ENCODE measurements at regions of chr14 and their contacts with region 1.

Region 1: GRCh38 chr14:51979088-51979709 is 10.1 kb upstream of the RTRAF start:
- DNase-seq: peak; percentile 63
- H3K4me3 ChIP-seq: no peak overlapping the region; a peak in 1 of 4 replicates
- H3K27ac ChIP-seq: peak overlapping the region in 1 of 2 experiments; percentile 55; a peak in 1 of 4 replicates
- H3K4me1 ChIP-seq: peaks cover 0 to 2% of the 10 kb centered on the region in 2 experiments; a peak in 2 of 4 replicates
- H3K27me3 ChIP-seq: no peaks in the 10 kb centered on the region
- CTCF ChIP-seq: peak; percentile 91
- EP300 ChIP-seq: no peak
- RAD21 ChIP-seq: peak; percentile 93

Region 2: DNA sequence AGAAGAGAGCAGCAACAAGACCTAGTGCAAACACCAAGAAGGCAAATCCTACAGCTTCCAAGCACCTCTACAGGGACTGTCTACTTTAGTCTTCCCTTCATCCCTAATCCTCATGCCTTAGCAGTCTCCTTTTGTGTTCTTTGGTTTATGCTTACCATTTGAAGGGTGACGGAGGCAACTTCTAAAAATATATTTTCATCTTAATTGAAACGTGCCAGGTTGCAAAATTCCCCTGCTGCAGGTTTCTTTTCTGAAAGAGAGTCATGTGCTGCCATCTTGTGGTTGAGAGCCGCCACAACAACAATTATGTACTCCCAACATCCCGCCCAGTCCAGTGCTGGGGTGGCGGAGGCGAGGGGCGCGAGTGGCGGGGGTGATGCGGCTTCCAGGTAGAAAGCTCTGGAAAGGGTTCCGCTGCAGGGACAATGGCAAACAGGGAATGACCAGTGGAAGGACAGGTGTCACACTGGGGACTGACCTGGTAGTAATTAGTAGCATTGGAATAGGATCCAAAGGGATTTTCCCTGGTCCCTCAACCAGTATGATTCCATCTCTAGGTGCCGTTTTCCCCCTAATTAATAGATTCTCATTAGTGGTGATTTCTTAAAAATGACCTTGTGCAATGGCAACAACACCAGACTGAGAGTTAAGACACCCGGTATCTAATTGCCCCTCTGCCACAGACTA is 199.1 kb before region 1 on chr14:
- CTCF ChIA-PET with region 1: interaction called, 81 read pairs
- POLR2A ChIA-PET with region 1: no interaction called
- DNase-seq: peak; percentile 80
- H3K4me3 ChIP-seq: peak overlapping the region; percentile 33 to 52; a peak in 3 of 4 replicates
- H3K27ac ChIP-seq: no peak overlapping the region; a peak in 1 of 4 replicates
- H3K4me1 ChIP-seq: peaks cover 0 to 7% of the 10 kb centered on the region in 2 experiments; a peak in 2 of 4 replicates
- H3K27me3 ChIP-seq: no peaks in the 10 kb centered on the region
- CTCF ChIP-seq: peak; percentile 87
- EP300 ChIP-seq: no peak
- RAD21 ChIP-seq: peak; percentile 86

Region 3: DNA sequence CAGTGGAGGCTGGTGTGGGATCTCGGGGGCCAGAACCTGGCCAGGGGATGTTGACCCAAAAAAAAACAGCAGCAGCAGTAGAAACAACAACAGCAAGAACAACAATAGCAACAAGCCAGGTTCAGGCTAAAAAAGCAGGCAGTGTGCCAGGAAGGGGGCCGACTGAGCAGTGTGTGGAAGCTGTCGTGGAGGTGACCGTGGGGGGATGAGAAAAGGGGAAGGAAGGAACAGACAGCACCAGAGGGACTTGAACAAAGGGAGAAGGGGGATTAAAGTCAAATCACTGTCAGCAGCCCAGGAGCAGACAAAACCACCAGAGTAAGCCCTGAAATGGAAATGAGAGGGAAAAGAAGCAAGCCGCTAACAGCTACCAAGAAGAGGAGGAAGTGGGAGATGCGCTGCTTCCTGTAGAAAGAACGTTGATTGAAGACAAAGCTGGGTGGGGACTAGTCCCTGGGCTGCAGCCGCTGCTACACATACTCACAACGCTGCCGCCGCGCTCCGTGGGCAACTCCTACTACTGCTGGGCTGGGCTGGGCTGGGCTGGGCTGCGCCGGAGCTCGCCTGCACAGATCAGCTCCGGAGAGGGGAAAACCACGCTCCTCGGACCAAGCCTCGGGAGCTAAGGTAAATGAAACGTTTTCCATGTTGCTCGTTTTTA is 118.9 kb before region 1 on chr14 and contains the start of gene GNG2:
- CTCF ChIA-PET with region 1: interaction called, 35 read pairs
- POLR2A ChIA-PET with region 1: interaction called, 9 read pairs
- DNase-seq: peak; percentile 75
- H3K4me3 ChIP-seq: peak within 1 kb of the TSS; percentile 70 to 82
- H3K27ac ChIP-seq: peak within 1 kb of the TSS; percentile 75 to 92
- H3K4me1 ChIP-seq: peaks cover 20 to 22% of the 10 kb centered on the region in 2 experiments
- H3K27me3 ChIP-seq: no peaks in the 10 kb centered on the region
- CTCF ChIP-seq: no peak
- EP300 ChIP-seq: peak in 1 of 2 experiments; percentile 22; a peak in 2 of 4 replicates
- RAD21 ChIP-seq: no peak; the same call in 1 of the 2 replicates
- polyA plus RNA-seq, gene GNG2: 17.8 and 19.1 TPM in 2 replicates

Region 4: DNA sequence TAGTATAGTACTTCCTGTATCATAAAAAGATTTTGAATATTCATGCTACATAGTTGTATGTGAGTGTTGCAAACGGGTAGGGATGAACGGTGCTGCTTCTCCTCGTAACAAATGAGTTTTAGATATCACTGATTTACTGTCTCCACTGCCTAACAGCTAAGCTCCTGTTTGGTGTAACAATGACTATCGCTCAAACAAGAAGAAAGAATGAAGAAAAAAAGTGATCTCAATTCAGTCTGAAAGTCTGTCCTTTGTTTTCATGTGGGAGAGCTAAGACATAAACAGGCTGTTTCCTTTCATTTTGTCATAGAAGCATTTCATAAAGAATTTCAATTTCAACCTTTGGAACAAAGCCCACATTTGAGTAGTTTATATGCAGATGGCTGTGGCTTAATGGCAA is 15.9 kb before region 1 on chr14:
- CTCF ChIA-PET with region 1: interaction called, 43 read pairs
- POLR2A ChIA-PET with region 1: no interaction called
- DNase-seq: no peak
- H3K4me3 ChIP-seq: no peak overlapping the region
- H3K27ac ChIP-seq: peak overlapping the region; percentile 28 to 79; a peak in 3 of 4 replicates
- H3K4me1 ChIP-seq: peaks cover 7 to 13% of the 10 kb centered on the region in 2 experiments; a peak in 3 of 4 replicates
- H3K27me3 ChIP-seq: no peaks in the 10 kb centered on the region
- CTCF ChIP-seq: no peak
- EP300 ChIP-seq: no peak
- RAD21 ChIP-seq: no peak

Region 5: DNA sequence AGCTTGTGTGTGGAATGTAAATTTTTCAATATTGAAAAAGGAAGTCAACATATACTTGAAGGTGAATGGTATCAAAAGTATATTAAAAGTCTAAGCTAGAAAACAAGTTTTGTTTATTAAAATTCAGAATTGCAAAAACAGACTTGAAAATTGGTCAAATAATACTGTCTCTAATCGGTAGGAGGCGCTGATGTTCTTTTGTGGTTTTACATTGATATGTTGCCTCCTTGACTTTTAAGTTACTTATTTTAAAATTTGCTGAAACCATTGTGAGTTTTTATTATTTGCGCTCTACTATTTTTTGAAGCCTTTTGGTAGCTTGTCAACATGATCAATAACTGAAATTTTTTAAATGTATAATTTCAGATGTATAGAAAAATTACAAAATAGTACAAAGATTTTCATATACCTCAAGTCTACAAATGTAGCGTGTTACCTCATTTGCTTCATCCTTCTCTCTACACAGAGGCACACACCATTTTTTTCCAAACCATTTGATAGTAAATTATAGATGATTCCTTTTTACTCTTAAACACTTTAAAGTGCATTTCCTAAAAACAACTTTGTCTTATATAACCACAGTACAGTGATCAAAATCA is 17.0 kb after region 1 on chr14:
- CTCF ChIA-PET with region 1: interaction called, 12 read pairs
- POLR2A ChIA-PET with region 1: no interaction called
- DNase-seq: no peak
- H3K4me3 ChIP-seq: no peak overlapping the region; a peak in 1 of 4 replicates
- H3K27ac ChIP-seq: peak overlapping the region in 1 of 2 experiments; percentile 19; a peak in 1 of 4 replicates
- H3K4me1 ChIP-seq: peaks cover 0 to 21% of the 10 kb centered on the region in 2 experiments; a peak in 2 of 4 replicates
- H3K27me3 ChIP-seq: no peaks in the 10 kb centered on the region
- CTCF ChIP-seq: peak; percentile 88
- EP300 ChIP-seq: no peak
- RAD21 ChIP-seq: peak; percentile 66